Naive thymus-derived CD4-positive, alpha-beta T cell (primary cell): ENCODE measurements at regions of chr9 and their contacts with region 1.

Region 1: GRCh38 chr9:90102292-90102901 is 497.6 kb downstream of the GADD45G start:
- DNase-seq: peak; percentile 41 to 88 (median 79)
- ATAC-seq: peak; percentile 100
- H3K4me3 ChIP-seq: no peak overlapping the region
- H3K4me3 Mint-ChIP-seq: no peak overlapping the region
- H3K27ac ChIP-seq: no peak overlapping the region
- H3K27ac Mint-ChIP-seq: peak overlapping the region in 1 of 9 donors; percentile 40
- H3K4me1 ChIP-seq: peaks cover 0 to 6% of the 10 kb centered on the region in 2 donors
- H3K4me1 Mint-ChIP-seq: peaks cover 0 to 11% (median 6%) of the 10 kb centered on the region in 7 donors
- H3K27me3 ChIP-seq: no peaks in the 10 kb centered on the region
- H3K27me3 Mint-ChIP-seq: peaks cover 0 to 16% (median 0%) of the 10 kb centered on the region in 5 donors

Region 2: DNA sequence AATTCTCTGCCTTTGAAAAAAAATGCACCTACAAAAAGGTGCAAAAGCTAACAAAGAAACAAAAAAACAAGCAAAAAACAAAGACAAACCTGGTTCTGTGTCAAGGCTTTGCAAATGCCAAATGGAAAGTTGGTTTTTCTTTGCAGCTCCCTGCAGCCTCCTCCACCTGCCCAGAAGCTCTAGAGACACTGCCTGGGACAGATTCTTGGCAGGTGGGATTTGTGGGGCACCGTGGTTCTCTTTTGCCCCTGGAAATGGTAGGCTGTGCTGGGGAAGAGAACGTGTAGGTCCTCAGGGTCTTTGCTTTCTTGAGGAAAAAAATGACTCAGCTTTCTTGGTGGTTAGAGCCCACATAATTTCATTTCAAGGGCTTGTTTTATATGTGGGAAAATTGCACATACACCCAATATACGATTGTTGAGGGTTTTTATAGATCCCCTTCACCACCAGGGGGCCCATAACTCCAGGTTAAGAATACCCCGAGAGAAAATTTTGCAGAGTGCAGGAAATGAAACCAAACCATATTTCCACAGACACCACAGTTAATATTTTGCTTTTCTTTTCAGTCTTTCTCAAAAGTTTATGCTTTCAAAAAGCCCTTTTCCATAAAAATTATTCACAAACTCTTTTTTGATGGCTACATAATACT is 1508.7 kb before region 1 on chr9:
- CTCF ChIA-PET with region 1: no interaction called
- POLR2A ChIA-PET with region 1: no interaction called
- intact Hi-C with region 1: loop called in 1 of 2 experiments (anchors 5 kb)
- DNase-seq: peak in 8 of 9 donors; percentile 32 to 69 (median 64)
- ATAC-seq: peak; percentile 72
- H3K4me3 ChIP-seq: no peak overlapping the region
- H3K4me3 Mint-ChIP-seq: no peak overlapping the region
- H3K27ac ChIP-seq: no peak overlapping the region
- H3K27ac Mint-ChIP-seq: no peak overlapping the region
- H3K4me1 ChIP-seq: no peaks in the 10 kb centered on the region
- H3K4me1 Mint-ChIP-seq: peaks cover 0 to 9% (median 0%) of the 10 kb centered on the region in 7 donors
- H3K27me3 ChIP-seq: no peaks in the 10 kb centered on the region
- H3K27me3 Mint-ChIP-seq: peaks cover 8 to 29% (median 16%) of the 10 kb centered on the region in 5 donors

Region 3: GRCh38 chr9:89576404-89576839 is 526.0 kb before region 1 on chr9:
- CTCF ChIA-PET with region 1: interaction called, 3 read pairs
- POLR2A ChIA-PET with region 1: interaction called, 3 read pairs
- intact Hi-C with region 1: loop called (anchors 1 kb)
- DNase-seq: peak in 5 of 9 donors; percentile 27 to 41 (median 38)
- ATAC-seq: no peak
- H3K4me3 ChIP-seq: no peak overlapping the region
- H3K4me3 Mint-ChIP-seq: no peak overlapping the region
- H3K27ac ChIP-seq: no peak overlapping the region
- H3K27ac Mint-ChIP-seq: no peak overlapping the region
- H3K4me1 ChIP-seq: no peaks in the 10 kb centered on the region
- H3K4me1 Mint-ChIP-seq: peaks cover 10 to 24% (median 17%) of the 10 kb centered on the region in 7 donors
- H3K27me3 ChIP-seq: peaks cover 0 to 3% of the 10 kb centered on the region in 2 donors
- H3K27me3 Mint-ChIP-seq: peaks cover 17 to 65% (median 32%) of the 10 kb centered on the region in 5 donors

Region 4: GRCh38 chr9:89597711-89598625 is 504.4 kb before region 1 on chr9:
- CTCF ChIA-PET with region 1: interaction called, 51 read pairs
- POLR2A ChIA-PET with region 1: interaction called, 7 read pairs
- intact Hi-C with region 1: loop called (anchors 1 kb)
- DNase-seq: peak in 8 of 9 donors; percentile 26 to 58 (median 48)
- ATAC-seq: peak; percentile 65
- H3K4me3 ChIP-seq: no peak overlapping the region
- H3K4me3 Mint-ChIP-seq: no peak overlapping the region
- H3K27ac ChIP-seq: no peak overlapping the region
- H3K27ac Mint-ChIP-seq: no peak overlapping the region
- H3K4me1 ChIP-seq: peaks cover 0 to 2% of the 10 kb centered on the region in 2 donors
- H3K4me1 Mint-ChIP-seq: peaks cover 0 to 5% (median 2%) of the 10 kb centered on the region in 7 donors
- H3K27me3 ChIP-seq: no peaks in the 10 kb centered on the region
- H3K27me3 Mint-ChIP-seq: peaks cover 0 to 39% (median 0%) of the 10 kb centered on the region in 5 donors

Region 5: DNA sequence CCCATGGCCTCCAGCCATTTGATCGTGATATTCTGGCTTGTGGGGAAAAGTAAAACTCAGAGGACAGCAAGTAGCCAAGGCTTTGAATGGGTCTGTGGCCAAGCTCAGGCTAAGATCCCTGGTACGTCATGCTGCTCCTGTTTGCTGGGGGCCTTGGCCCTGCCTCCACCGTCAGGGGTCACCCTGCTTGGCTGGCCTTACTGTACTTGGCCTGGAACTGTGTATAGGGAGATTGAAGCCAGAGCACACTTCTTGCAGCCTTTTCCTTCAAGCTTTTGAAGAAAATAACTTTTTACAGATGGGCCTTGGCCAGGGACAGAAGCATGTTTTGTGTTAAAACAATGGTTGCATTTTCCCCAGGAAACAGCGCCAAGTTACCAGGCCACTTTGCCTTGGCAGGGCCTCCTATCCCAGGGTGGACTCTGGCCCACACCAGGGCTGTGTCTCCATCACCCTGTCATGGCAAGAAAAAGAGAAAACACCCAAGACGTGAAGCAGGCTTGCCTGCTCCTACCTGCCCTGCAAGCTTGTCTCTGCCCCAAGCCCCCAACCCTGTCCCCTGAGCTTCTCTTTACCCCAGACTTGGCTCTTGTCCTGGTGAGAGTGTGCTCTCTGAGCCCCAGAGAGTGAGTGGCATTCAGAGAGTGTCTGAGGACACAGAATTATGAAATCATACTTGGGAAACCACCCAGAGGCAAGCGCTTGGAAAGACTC is 210.6 kb before region 1 on chr9:
- CTCF ChIA-PET with region 1: no interaction called
- POLR2A ChIA-PET with region 1: no interaction called
- intact Hi-C with region 1: no loop called
- DNase-seq: no peak
- ATAC-seq: no peak
- H3K4me3 ChIP-seq: no peak overlapping the region
- H3K4me3 Mint-ChIP-seq: no peak overlapping the region
- H3K27ac ChIP-seq: no peak overlapping the region
- H3K27ac Mint-ChIP-seq: no peak overlapping the region
- H3K4me1 ChIP-seq: no peaks in the 10 kb centered on the region
- H3K4me1 Mint-ChIP-seq: no peaks in the 10 kb centered on the region
- H3K27me3 ChIP-seq: no peaks in the 10 kb centered on the region
- H3K27me3 Mint-ChIP-seq: peaks cover 0 to 42% (median 0%) of the 10 kb centered on the region in 5 donors

Region 6: GRCh38 chr9:89919169-89919681 is 183.2 kb before region 1 on chr9:
- CTCF ChIA-PET with region 1: no interaction called
- POLR2A ChIA-PET with region 1: no interaction called
- intact Hi-C with region 1: loop called (anchors 1 to 2 kb)
- DNase-seq: peak in 8 of 9 donors; percentile 14 to 53 (median 23)
- ATAC-seq: peak; percentile 77
- H3K4me3 ChIP-seq: no peak overlapping the region
- H3K4me3 Mint-ChIP-seq: peak overlapping the region in 3 of 10 donors; percentile 10 to 48 (median 17)
- H3K27ac ChIP-seq: no peak overlapping the region
- H3K27ac Mint-ChIP-seq: peak overlapping the region in 1 of 9 donors; percentile 15
- H3K4me1 ChIP-seq: no peaks in the 10 kb centered on the region
- H3K4me1 Mint-ChIP-seq: peaks cover 4 to 14% (median 8%) of the 10 kb centered on the region in 7 donors
- H3K27me3 ChIP-seq: no peaks in the 10 kb centered on the region
- H3K27me3 Mint-ChIP-seq: peaks cover 0 to 17% (median 7%) of the 10 kb centered on the region in 5 donors

Region 7: DNA sequence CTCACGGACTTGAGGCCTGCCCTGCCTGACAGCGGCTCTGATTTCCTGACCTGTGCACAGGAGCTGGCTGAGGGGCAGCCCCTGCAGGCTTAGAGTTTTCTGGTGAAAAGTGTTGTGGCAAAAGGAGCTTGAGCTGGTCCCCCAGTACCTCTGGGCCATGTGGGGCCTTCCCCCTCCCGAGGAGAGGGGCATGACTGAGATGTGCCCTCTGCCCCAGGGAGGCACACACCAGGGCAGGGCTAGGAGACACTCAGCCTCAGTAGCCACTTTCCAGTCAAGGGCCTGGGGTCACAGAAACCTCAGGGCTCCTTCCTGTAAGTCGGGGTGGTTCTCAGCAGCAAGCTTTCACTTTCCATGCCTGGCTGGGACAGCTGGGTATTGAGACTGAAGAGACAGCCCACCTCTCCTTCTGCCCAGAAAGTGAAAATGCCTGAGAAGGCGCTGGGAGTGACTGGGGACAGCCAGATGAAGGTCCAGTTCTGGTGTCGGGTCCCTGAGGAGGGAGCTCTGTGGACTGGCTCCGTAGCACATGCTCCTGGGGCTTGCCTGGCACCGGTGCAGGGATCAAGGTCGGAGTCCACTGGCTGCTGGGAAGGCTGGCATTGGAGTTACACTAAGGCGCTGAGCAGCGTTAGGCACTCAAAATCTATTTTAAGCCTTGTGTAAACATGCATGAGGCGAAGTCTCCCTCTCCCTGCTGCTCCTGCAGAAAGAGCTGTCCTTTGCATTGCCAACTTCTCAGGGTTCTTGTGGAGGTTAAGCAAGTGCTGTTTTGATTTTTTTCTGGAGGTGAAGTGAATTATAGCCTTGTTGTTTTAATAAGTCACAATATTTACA is 102.6 kb before region 1 on chr9:
- CTCF ChIA-PET with region 1: interaction called, 3 read pairs
- POLR2A ChIA-PET with region 1: no interaction called
- intact Hi-C with region 1: loop called (anchors 5 to 10 kb)
- DNase-seq: peak in 7 of 9 donors; percentile 15 to 59 (median 36)
- ATAC-seq: peak; percentile 79
- H3K4me3 ChIP-seq: peak overlapping the region; percentile 63
- H3K4me3 Mint-ChIP-seq: peak overlapping the region; percentile 69 to 86 (median 78)
- H3K27ac ChIP-seq: peak overlapping the region; percentile 49
- H3K27ac Mint-ChIP-seq: peak overlapping the region; percentile 63 to 90 (median 83)
- H3K4me1 ChIP-seq: peaks cover 10 to 20% of the 10 kb centered on the region in 2 donors
- H3K4me1 Mint-ChIP-seq: peaks cover 20 to 43% (median 27%) of the 10 kb centered on the region in 7 donors
- H3K27me3 ChIP-seq: no peaks in the 10 kb centered on the region
- H3K27me3 Mint-ChIP-seq: peaks cover 0 to 4% (median 0%) of the 10 kb centered on the region in 5 donors

Region 8: GRCh38 chr9:90219548-90220118 is 117.2 kb after region 1 on chr9:
- CTCF ChIA-PET with region 1: no interaction called
- POLR2A ChIA-PET with region 1: no interaction called
- intact Hi-C with region 1: no loop called
- DNase-seq: peak in 5 of 9 donors; percentile 14 to 33 (median 19)
- ATAC-seq: peak; percentile 61
- H3K4me3 ChIP-seq: no peak overlapping the region
- H3K4me3 Mint-ChIP-seq: no peak overlapping the region
- H3K27ac ChIP-seq: no peak overlapping the region
- H3K27ac Mint-ChIP-seq: no peak overlapping the region
- H3K4me1 ChIP-seq: no peaks in the 10 kb centered on the region
- H3K4me1 Mint-ChIP-seq: peaks cover 0 to 8% (median 3%) of the 10 kb centered on the region in 7 donors
- H3K27me3 ChIP-seq: no peaks in the 10 kb centered on the region
- H3K27me3 Mint-ChIP-seq: peaks cover 0 to 31% (median 12%) of the 10 kb centered on the region in 5 donors

Region 9: GRCh38 chr9:90569511-90569910 is 467.1 kb after region 1 on chr9:
- CTCF ChIA-PET with region 1: no interaction called
- POLR2A ChIA-PET with region 1: no interaction called
- intact Hi-C with region 1: no loop called
- DNase-seq: no peak
- ATAC-seq: no peak
- H3K4me3 ChIP-seq: no peak overlapping the region
- H3K4me3 Mint-ChIP-seq: no peak overlapping the region
- H3K27ac ChIP-seq: no peak overlapping the region
- H3K27ac Mint-ChIP-seq: no peak overlapping the region
- H3K4me1 ChIP-seq: no peaks in the 10 kb centered on the region
- H3K4me1 Mint-ChIP-seq: peaks cover 0 to 2% (median 0%) of the 10 kb centered on the region in 7 donors
- H3K27me3 ChIP-seq: no peaks in the 10 kb centered on the region
- H3K27me3 Mint-ChIP-seq: peaks cover 9 to 31% (median 25%) of the 10 kb centered on the region in 5 donors

Region 10: DNA sequence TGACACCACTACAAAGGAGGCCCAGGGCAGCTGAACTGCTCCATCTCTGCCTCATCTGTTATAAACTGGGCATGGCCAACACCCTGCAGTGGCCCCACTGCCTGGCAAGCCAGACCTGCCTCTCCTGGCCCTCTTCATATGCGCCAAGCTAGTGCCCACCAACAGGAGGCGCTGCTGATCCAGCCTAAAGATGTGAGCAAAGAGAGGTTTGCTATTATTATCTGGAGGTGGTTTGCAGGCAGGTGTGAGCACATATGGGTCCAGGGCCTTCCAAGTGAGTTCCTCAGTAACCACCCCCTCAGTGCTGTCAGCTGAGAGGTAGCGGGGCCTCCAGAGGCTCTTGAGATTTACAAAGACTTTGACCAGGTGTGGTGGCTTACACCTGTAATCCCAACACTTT is 931.4 kb after region 1 on chr9:
- CTCF ChIA-PET with region 1: no interaction called
- POLR2A ChIA-PET with region 1: no interaction called
- intact Hi-C with region 1: no loop called
- DNase-seq: peak in 8 of 9 donors; percentile 26 to 69 (median 38)
- ATAC-seq: peak; percentile 50
- H3K4me3 ChIP-seq: no peak overlapping the region
- H3K4me3 Mint-ChIP-seq: no peak overlapping the region
- H3K27ac ChIP-seq: no peak overlapping the region
- H3K27ac Mint-ChIP-seq: no peak overlapping the region
- H3K4me1 ChIP-seq: peaks cover 8 to 11% of the 10 kb centered on the region in 2 donors
- H3K4me1 Mint-ChIP-seq: peaks cover 7 to 39% (median 10%) of the 10 kb centered on the region in 7 donors
- H3K27me3 ChIP-seq: no peaks in the 10 kb centered on the region
- H3K27me3 Mint-ChIP-seq: peaks cover 4 to 28% (median 25%) of the 10 kb centered on the region in 5 donors